HepG2 (cell line): ENCODE measurements at regions of chr15 and their contacts with region 1.

Region 1: GRCh38 chr15:66251790-66252684 is 1.5 kb downstream of the MEGF11 start:
- DNase-seq: peak; percentile 7
- ATAC-seq: peak; percentile 91
- H3K4me3 ChIP-seq: peak overlapping the region; percentile 53 to 69 (median 54)
- H3K27ac ChIP-seq: no peak overlapping the region
- H3K4me1 ChIP-seq: peaks cover 20% of the 10 kb centered on the region
- H3K27me3 ChIP-seq: peaks cover 25 to 87% of the 10 kb centered on the region in 2 experiments
- CTCF ChIP-seq: peak; percentile 80
- EP300 ChIP-seq: no peak
- POLR2A ChIP-seq: no peak
- RAD21 ChIP-seq: no peak

Region 2: GRCh38 chr15:65541231-65541820 is 710.7 kb before region 1 on chr15:
- CTCF ChIA-PET with region 1: no interaction called
- POLR2A ChIA-PET with region 1: no interaction called
- in situ Hi-C with region 1: no loop called
- intact Hi-C with region 1: no loop called
- DNase-seq: no peak
- ATAC-seq: no peak
- H3K4me3 ChIP-seq: no peak overlapping the region
- H3K27ac ChIP-seq: no peak overlapping the region
- H3K4me1 ChIP-seq: no peaks in the 10 kb centered on the region
- H3K27me3 ChIP-seq: no peaks in the 10 kb centered on the region
- CTCF ChIP-seq: no peak
- EP300 ChIP-seq: no peak
- POLR2A ChIP-seq: no peak
- RAD21 ChIP-seq: no peak

Region 3: GRCh38 chr15:65841121-65841925 is 410.7 kb before region 1 on chr15:
- CTCF ChIA-PET with region 1: no interaction called
- POLR2A ChIA-PET with region 1: no interaction called
- in situ Hi-C with region 1: no loop called
- intact Hi-C with region 1: no loop called
- DNase-seq: no peak
- ATAC-seq: peak; percentile 56
- H3K4me3 ChIP-seq: peak overlapping the region; percentile 31 to 50 (median 37); a peak in 4 of 6 replicates
- H3K27ac ChIP-seq: no peak overlapping the region
- H3K4me1 ChIP-seq: peaks cover 56% of the 10 kb centered on the region
- H3K27me3 ChIP-seq: no peaks in the 10 kb centered on the region
- CTCF ChIP-seq: no peak
- EP300 ChIP-seq: no peak
- POLR2A ChIP-seq: no peak
- RAD21 ChIP-seq: no peak

Region 4: GRCh38 chr15:66276546-66276945 is 24.5 kb after region 1 on chr15:
- CTCF ChIA-PET with region 1: no interaction called
- POLR2A ChIA-PET with region 1: no interaction called
- in situ Hi-C with region 1: no loop called
- intact Hi-C with region 1: no loop called
- DNase-seq: no peak
- ATAC-seq: no peak
- H3K4me3 ChIP-seq: no peak overlapping the region
- H3K27ac ChIP-seq: no peak overlapping the region
- H3K4me1 ChIP-seq: no peaks in the 10 kb centered on the region
- H3K27me3 ChIP-seq: peaks cover 0 to 15% of the 10 kb centered on the region in 2 experiments; a peak in 3 of 5 replicates
- CTCF ChIP-seq: no peak
- EP300 ChIP-seq: no peak
- POLR2A ChIP-seq: no peak
- RAD21 ChIP-seq: no peak

Region 5: GRCh38 chr15:66287461-66288057 is 35.5 kb after region 1 on chr15:
- CTCF ChIA-PET with region 1: no interaction called
- POLR2A ChIA-PET with region 1: no interaction called
- in situ Hi-C with region 1: loop called (anchors 5 kb)
- intact Hi-C with region 1: no loop called
- DNase-seq: no peak
- ATAC-seq: 0 out of 3 replicates have a peak, but pooled peaks have one; percentile 25
- H3K4me3 ChIP-seq: no peak overlapping the region
- H3K27ac ChIP-seq: no peak overlapping the region
- H3K4me1 ChIP-seq: peaks cover 23% of the 10 kb centered on the region
- H3K27me3 ChIP-seq: no peaks in the 10 kb centered on the region
- CTCF ChIP-seq: peak; percentile 20; the same call in 1 of the 2 replicates
- EP300 ChIP-seq: no peak
- POLR2A ChIP-seq: no peak
- RAD21 ChIP-seq: no peak